Left cardiac atrium (tissue), 4 donors: ENCODE measurements at regions of chr21 and their contacts with region 1.

Region 1: DNA sequence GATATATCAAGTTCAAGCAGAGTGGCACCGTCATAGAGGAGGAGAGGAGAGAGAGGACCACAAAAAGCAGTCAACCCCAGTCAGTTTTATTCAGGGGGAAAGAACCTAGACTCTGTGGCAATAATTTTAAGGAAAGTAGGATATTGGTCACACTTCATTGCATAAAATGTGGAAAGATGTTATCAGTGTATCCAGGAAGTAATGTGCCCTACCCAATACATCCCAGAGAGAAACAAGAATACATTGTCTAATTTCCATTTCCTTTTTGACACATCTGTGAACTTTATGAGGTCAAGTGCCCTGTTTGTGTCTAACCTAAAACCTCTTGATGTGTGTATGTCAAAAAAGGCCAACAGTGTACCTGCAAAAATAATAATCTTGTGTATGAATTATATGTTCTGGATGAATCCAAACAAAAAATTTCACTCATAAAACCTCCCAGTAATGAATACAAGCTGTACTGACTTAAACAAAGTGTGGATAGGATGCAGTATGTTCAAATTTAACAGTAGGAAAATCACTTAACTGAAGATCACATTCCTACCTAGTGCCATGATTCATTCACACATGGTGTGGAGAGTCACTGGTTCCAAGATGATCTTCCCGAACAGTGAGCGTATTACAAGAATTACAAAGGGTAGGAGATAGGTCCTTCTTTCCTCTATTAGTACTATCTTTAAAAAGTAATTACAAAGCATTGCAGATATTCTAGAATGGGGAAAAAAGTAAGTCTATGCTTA is 712.1 kb upstream of the CXADR start:
- DNase-seq: no peak
- ATAC-seq: no peak

Region 2: DNA sequence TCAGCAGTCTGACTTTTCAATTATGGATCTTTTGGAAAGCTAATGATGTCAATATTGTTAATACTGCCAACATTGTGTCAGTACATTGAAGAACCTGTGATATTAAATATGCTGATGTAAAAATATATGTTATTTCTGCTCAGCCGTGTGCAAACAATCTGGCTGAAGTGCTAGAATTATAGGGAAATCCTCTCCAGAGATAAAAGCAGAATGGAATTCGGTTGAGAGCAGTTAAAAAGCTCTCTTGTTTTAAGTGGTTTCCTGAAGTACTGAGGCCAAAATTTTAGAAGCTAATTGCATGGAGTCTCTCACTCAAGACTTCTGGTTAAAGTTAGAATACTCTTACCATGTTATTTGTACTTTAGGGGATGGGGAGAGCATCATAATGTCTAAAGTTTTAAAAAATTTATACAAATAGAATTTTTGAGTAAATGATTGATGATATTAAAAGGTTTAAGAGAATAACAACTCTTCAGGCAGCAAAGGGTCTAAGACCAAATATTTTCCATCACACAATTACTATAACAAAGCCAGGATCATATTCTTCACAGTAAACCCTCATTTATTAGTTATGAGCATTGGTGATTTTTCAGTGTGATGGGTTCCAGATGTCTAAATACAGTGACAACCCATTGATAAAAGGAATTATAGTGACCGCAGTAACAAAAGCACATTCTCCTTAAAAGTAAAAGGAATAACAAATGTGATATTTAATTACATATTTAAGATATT is 122.1 kb before region 1 on chr21:
- intact Hi-C with region 1: no loop called
- DNase-seq: no peak
- ATAC-seq: no peak

Region 3: DNA sequence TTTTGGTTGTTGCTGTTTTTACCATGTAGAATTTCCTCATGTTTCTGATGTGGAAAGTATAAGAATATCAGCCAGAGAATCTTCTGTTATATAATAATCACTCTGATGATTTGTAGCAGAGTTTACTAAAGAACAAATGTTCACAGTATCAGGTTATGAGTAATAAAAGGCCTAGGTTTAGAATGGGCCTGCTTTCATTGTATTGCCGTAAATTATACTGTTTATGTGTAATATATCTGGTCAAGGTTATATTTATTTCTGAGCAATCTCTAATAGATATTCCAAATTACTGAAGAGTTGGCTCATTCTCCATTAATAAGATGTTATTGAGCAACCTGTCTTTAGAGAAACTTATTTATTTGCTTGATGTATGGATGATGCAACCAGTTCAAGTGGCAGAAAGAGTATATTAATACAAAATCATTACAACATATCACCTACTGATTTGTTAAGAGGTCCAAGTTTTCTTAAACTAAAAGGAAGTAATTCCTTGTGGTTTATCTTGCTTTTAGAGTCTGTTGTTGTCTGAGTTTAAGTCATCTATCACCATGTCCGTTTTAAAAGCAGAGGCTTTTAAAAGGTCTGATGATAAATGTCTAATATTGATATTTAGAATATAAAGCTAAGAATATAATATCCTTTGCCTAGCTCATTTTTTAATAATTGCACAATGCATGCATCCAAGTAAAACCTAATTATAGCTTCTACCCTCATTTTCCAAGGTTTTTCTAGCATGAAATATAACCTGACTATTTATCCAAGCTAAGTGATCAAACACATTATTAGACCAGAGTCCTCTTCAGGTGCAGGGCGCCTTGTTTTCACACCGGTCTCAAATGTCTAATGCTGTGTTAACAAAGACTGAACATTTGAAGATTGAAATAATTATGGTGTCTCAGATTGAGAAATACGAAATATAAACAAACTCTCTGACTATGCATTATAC is 62.9 kb after region 1 on chr21:
- intact Hi-C with region 1: loop called in 1 of 2 experiments (anchors 10 kb)
- DNase-seq: no peak
- ATAC-seq: no peak